ENCODE measurements at regions of chr14 and their contacts with region 1.

Region 1: DNA sequence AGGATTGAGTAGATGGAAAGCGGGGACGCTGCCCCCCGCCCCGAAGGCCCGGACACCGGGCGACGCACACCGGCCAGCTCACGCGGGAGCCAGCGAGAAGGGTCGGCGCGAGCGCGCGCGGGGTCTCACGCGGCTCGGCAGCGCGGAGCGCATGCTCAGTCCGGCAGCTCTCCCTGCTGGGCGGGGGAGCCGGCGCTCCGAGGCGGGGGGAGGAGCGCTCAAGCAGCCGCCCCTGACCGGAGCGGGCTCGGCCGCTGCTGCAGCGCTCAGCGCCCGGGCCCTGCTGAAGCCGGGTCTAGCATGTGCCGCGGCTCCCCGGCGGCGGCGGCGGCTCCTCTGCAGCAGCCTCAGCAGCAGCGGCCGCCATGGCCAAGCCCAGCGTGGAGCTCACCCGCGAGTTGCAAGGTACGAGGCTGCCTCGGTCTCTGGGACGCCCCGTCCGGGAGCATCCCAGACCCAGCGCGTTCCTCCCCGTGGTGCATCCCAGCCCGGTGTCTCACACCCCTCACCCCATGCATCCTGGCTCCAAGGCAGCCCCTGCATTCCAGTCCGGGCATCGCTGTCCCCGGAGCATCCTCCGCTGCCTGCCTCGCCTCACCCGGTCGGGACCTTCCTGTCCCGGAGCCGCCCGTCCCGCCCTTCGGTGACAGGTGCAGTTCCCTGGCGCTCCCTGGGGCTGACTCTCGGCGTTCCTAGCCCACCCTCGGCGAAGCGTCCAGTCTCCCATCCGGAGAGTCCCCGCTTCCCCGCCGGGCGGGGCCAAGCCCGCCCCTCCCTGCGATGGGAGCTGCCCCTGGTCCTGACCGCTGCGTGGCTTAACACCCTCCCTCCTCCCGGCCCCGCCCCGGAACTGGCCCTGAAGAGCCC is at the start of gene CARMIL3:
- DNase-seq: peak; percentile 74
- H3K4me3 Mint-ChIP-seq: peak within 1 kb of the TSS; percentile 70
- H3K27ac Mint-ChIP-seq: no peak within 1 kb of the TSS
- H3K4me1 Mint-ChIP-seq: peaks cover 20% of the 10 kb centered on the region
- H3K27me3 Mint-ChIP-seq: peaks cover 4% of the 10 kb centered on the region
- total RNA-seq, gene CARMIL3: 0.75 to 1.00 TPM

Region 2: DNA sequence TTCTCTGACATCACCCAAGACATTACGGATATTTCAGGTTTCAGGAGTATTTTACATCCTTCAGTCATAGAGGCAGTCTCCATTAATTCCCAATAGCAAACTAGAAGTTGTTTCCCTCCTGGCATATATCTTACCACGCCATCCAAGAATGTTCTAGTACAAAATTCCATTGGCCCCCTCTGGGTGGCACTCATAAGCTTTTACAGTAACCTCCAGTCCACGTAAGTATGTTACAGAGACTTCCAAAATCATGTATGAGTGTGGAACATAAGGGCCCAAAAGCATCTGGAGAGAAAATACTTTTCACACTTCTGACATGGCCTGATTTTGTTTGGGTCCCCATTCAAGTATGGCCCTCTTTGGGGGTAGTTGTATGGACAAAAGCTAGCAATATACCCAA is 156.5 kb before region 1 on chr14:
- CTCF ChIA-PET with region 1: no interaction called
- POLR2A ChIA-PET with region 1: no interaction called
- intact Hi-C with region 1: no loop called
- DNase-seq: no peak
- H3K4me3 Mint-ChIP-seq: no peak overlapping the region
- H3K27ac Mint-ChIP-seq: no peak overlapping the region
- H3K4me1 Mint-ChIP-seq: peaks cover 2% of the 10 kb centered on the region
- H3K27me3 Mint-ChIP-seq: peaks cover 15% of the 10 kb centered on the region

Region 3: DNA sequence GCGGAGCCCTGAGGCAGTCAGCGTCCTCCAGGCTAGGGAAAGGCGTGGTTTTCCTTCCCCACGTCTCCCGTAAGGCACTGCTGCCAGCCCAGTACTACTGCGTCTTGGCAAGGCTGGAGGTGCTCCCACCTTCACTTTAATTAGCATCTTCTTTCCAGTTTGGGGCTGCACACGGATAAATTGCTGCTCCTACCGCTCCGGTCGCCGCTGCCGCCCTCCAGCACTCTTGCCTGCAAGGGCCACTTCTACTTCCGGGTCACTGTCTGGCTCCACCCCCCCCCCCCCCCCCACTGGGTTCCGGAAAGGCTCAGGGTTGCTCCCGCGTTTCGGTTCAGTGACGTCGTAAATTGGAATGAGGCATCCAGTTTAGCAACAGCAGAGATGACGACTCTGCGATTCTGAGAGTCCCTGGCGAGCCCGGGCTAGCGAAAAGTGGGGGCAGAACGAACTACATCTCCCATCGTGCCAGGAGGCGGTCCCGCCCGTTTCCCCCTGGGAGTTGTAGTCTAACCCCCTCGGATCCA is 180.2 kb after region 1 on chr14 and contains the start of gene NEDD8:
- CTCF ChIA-PET with region 1: no interaction called
- POLR2A ChIA-PET with region 1: no interaction called
- intact Hi-C with region 1: loop called (anchors 2 kb)
- DNase-seq: peak; percentile 96
- H3K4me3 Mint-ChIP-seq: peak within 1 kb of the TSS; percentile 93
- H3K27ac Mint-ChIP-seq: peak within 1 kb of the TSS; percentile 90
- H3K4me1 Mint-ChIP-seq: peaks cover 55% of the 10 kb centered on the region
- H3K27me3 Mint-ChIP-seq: no peaks in the 10 kb centered on the region
- total RNA-seq, gene NEDD8: 202 to 213 TPM

Region 4: DNA sequence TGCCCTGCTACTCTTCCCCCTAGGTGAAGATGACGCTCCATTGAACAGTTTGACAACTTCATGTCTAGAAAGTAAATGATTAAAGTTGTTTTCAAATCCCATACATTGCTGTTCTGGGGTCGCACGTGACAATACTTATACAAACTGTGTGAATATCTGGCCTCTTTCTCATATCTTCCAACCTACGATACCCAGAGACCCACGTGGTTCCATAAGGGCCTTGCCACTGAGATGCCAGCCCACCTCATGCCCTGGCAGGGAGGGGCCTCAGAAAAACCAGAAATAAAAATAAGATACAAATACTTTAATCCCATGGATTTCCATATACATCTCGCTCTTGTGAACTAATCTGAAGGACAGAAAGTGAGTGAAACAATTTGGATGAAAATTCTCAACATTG is 577.5 kb after region 1 on chr14:
- CTCF ChIA-PET with region 1: no interaction called
- POLR2A ChIA-PET with region 1: no interaction called
- intact Hi-C with region 1: no loop called
- DNase-seq: no peak
- H3K4me3 Mint-ChIP-seq: no peak overlapping the region
- H3K27ac Mint-ChIP-seq: peak overlapping the region; percentile 43
- H3K4me1 Mint-ChIP-seq: peaks cover 9% of the 10 kb centered on the region
- H3K27me3 Mint-ChIP-seq: peaks cover 1% of the 10 kb centered on the region

Measured in activated CD4-positive, alpha-beta memory T cell treated with anti-CD3 and anti-CD28 coated beads for 36 hours (primary cell).